ENCODE measurements at regions of chr4 and their contacts with region 1.

Region 1: GRCh38 chr4:107824353-107825071 is at the start of gene SGMS2:
- DNase-seq: peak; percentile 94
- ATAC-seq: peak; percentile 84
- H3K4me3 ChIP-seq: peak within 1 kb of the TSS; percentile 78
- H3K27ac ChIP-seq: peak within 1 kb of the TSS; percentile 84
- H3K4me1 ChIP-seq: peaks cover 14% of the 10 kb centered on the region
- H3K27me3 ChIP-seq: no peaks in the 10 kb centered on the region
- CTCF ChIP-seq: no peak
- total RNA-seq, gene SGMS2: 58.7 and 64.5 TPM in 2 replicates

Region 2: DNA sequence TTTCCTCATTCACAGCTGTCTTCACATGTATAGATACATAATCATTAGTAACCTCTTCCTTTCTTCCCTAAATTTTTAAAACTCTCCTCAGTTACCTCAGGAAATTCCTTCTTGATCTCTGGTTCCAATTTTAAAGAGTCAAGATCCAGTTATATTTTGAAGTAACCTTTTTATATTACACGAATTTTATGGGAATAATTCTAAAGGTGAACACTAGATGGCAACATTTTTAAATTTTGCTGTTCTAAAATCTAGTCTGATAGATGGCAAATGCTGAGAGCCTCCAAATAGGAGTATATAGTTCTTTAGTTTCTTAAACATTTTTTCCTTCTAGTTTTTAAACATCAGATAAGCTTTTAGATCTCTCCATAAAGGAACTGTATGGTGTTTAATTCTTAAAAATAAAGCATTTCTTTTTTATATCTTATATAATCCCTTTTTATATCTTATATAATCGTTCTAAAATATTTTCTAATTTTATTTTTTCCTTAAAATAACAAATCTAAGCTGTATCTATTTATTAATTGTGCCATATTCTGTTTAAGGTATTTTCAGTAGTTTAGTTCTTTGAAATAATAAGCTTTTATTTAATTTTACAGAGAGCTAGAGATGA is 66.5 kb before region 1 on chr4:
- CTCF ChIA-PET with region 1: no interaction called
- POLR2A ChIA-PET with region 1: no interaction called
- intact Hi-C with region 1: loop called (anchors 2 kb)
- DNase-seq: peak; percentile 61
- ATAC-seq: no peak
- H3K4me3 ChIP-seq: no peak overlapping the region
- H3K27ac ChIP-seq: no peak overlapping the region
- H3K4me1 ChIP-seq: no peaks in the 10 kb centered on the region
- H3K27me3 ChIP-seq: no peaks in the 10 kb centered on the region
- CTCF ChIP-seq: peak; percentile 64

Region 3: GRCh38 chr4:107801766-107802211 is 22.7 kb before region 1 on chr4:
- CTCF ChIA-PET with region 1: no interaction called
- POLR2A ChIA-PET with region 1: no interaction called
- intact Hi-C with region 1: loop called (anchors 1 kb)
- DNase-seq: peak; percentile 83
- ATAC-seq: peak; percentile 97
- H3K4me3 ChIP-seq: no peak overlapping the region
- H3K27ac ChIP-seq: peak overlapping the region; percentile 39; the same call in 1 of the 2 replicates
- H3K4me1 ChIP-seq: peaks cover 18% of the 10 kb centered on the region
- H3K27me3 ChIP-seq: no peaks in the 10 kb centered on the region
- CTCF ChIP-seq: no peak

Region 4: GRCh38 chr4:107853444-107854355 is 29.2 kb after region 1 on chr4:
- CTCF ChIA-PET with region 1: no interaction called
- POLR2A ChIA-PET with region 1: interaction called, 14 read pairs
- intact Hi-C with region 1: loop called (anchors 2 kb)
- DNase-seq: peak; percentile 60
- ATAC-seq: peak; percentile 69
- H3K4me3 ChIP-seq: peak overlapping the region; percentile 22; the same call in 1 of the 2 replicates
- H3K27ac ChIP-seq: peak overlapping the region; percentile 51
- H3K4me1 ChIP-seq: peaks cover 21% of the 10 kb centered on the region
- H3K27me3 ChIP-seq: no peaks in the 10 kb centered on the region
- CTCF ChIP-seq: no peak

Region 5: GRCh38 chr4:107863850-107864371 is 39.4 kb after region 1 on chr4:
- CTCF ChIA-PET with region 1: no interaction called
- POLR2A ChIA-PET with region 1: interaction called, 3 read pairs
- intact Hi-C with region 1: loop called (anchors 2 kb)
- DNase-seq: peak; percentile 72
- ATAC-seq: peak; percentile 66
- H3K4me3 ChIP-seq: no peak overlapping the region
- H3K27ac ChIP-seq: peak overlapping the region; percentile 77
- H3K4me1 ChIP-seq: peaks cover 29% of the 10 kb centered on the region
- H3K27me3 ChIP-seq: no peaks in the 10 kb centered on the region
- CTCF ChIP-seq: no peak

Region 6: GRCh38 chr4:107896158-107897045 is 71.9 kb after region 1 on chr4:
- CTCF ChIA-PET with region 1: no interaction called
- POLR2A ChIA-PET with region 1: interaction called, 3 read pairs
- intact Hi-C with region 1: loop called (anchors 1 kb)
- DNase-seq: peak; percentile 92
- ATAC-seq: peak; percentile 94
- H3K4me3 ChIP-seq: peak overlapping the region; percentile 36
- H3K27ac ChIP-seq: peak overlapping the region; percentile 82
- H3K4me1 ChIP-seq: peaks cover 33% of the 10 kb centered on the region
- H3K27me3 ChIP-seq: no peaks in the 10 kb centered on the region
- CTCF ChIP-seq: no peak

Region 7: DNA sequence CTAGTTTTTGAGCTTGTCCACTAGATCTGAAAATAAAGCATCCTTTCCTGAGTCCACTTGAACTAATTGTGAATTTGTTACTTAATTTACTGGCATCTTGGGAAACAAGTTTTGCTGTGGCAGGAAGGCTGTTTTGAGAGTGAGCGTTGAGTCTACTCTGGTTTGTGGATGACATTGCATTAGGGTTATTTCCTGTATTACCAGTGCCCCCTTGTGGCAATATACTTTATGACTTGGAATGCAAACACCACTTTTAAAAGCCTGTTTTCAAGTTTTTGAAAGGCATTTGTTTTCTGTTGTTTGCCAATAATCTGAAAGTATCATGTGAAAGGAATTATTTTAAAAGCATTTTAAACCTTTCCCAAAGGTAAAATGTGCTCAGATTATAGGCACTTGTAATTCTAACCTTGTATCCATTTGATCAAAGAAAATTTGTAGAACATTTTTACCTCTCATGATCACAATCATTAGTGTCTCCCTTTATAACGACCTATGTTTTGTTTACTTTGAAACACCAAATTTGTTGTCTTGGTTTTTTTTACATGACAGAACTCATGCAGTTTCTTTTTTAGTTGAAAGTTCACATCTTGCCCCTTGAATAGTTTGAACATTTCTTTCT is 88.9 kb after region 1 on chr4:
- CTCF ChIA-PET with region 1: no interaction called
- POLR2A ChIA-PET with region 1: no interaction called
- intact Hi-C with region 1: loop called (anchors 2 kb)
- DNase-seq: peak; percentile 76
- ATAC-seq: peak; percentile 64
- H3K4me3 ChIP-seq: no peak overlapping the region
- H3K27ac ChIP-seq: no peak overlapping the region
- H3K4me1 ChIP-seq: no peaks in the 10 kb centered on the region
- H3K27me3 ChIP-seq: no peaks in the 10 kb centered on the region
- CTCF ChIP-seq: peak; percentile 80

Region 8: GRCh38 chr4:107930821-107931774 is 106.6 kb after region 1 on chr4 and contains the start of gene CYP2U1:
- CTCF ChIA-PET with region 1: no interaction called
- POLR2A ChIA-PET with region 1: no interaction called
- intact Hi-C with region 1: no loop called
- DNase-seq: peak; percentile 70
- ATAC-seq: peak; percentile 97
- H3K4me3 ChIP-seq: peak within 1 kb of the TSS; percentile 67
- H3K27ac ChIP-seq: no peak within 1 kb of the TSS
- H3K4me1 ChIP-seq: peaks cover 13% of the 10 kb centered on the region; the same call in 1 of the 2 replicates
- H3K27me3 ChIP-seq: no peaks in the 10 kb centered on the region
- CTCF ChIP-seq: no peak
- total RNA-seq, gene CYP2U1: 4.1 and 4.4 TPM in 2 replicates